Activated T-helper 2 cell treated with anti-CD3 and anti-CD28 coated beads, Interferon-gamma antibody, Interleukin-2, Interleukin-4, amounts not matched to agents 10 μg/mL and 5 μg/mL and 100 μg/mL, durations not matched to agents 14 hours and 24 hours and 36 hours (primary cell): ENCODE measurements at regions of chr19 and their contacts with region 1.

Region 1: DNA sequence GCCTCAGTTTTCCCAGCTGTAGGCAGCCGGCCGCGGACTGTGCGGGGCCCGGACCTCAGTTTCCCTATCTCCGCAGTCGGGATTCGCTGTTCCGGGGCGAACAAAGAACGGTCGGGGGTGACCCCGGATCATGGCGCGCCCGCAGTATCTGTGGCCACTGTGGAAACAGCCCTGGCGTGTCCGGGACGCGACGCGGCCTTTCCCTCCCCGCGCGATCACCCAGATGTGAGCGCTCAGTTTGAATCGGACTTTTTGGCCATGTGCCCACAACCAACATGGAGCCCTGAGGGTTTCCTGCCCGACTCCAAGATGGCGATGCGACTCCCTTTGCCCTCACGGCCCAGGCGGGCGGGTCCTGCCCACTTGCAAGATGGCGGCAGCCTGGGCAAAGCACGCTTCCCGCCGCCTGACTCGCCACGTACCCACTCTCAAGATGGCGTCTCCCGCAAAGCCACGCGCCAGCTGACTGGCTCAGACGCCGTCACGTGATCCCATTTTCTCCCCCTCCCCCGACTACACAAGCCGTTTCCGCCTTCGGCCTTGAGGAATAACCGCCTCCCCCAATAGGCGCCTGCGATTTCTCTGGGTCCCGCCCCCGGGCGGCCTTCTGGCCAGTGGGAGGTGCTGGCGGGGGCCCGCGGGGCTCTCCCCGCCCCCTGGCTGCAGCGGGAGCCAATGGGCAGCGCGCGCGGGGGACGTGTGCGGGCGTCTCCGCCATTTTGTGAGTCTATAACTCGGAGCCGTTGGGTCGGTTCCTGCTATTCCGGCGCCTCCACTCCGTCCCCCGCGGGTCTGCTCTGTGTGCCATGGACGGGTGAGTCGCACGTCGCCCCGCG is at the start of gene PTBP1:
- DNase-seq: peak; percentile 100
- H3K4me3 Mint-ChIP-seq: peak within 1 kb of the TSS; percentile 91
- H3K27ac Mint-ChIP-seq: peak within 1 kb of the TSS; percentile 93
- H3K4me1 Mint-ChIP-seq: peaks cover 20% of the 10 kb centered on the region
- H3K27me3 Mint-ChIP-seq: no peaks in the 10 kb centered on the region
- total RNA-seq, gene PTBP1: 735 and 739 TPM in 2 replicates

Region 2: GRCh38 chr19:572140-572742 is 224.7 kb before region 1 on chr19 and contains the start of gene BSG:
- intact Hi-C with region 1: loop called (anchors 2 kb)
- DNase-seq: peak; percentile 99
- H3K4me3 Mint-ChIP-seq: peak within 1 kb of the TSS; percentile 86
- H3K27ac Mint-ChIP-seq: peak within 1 kb of the TSS; percentile 94
- H3K4me1 Mint-ChIP-seq: peaks cover 24% of the 10 kb centered on the region
- H3K27me3 Mint-ChIP-seq: no peaks in the 10 kb centered on the region
- total RNA-seq, gene BSG: 300 and 304 TPM in 2 replicates

Region 3: DNA sequence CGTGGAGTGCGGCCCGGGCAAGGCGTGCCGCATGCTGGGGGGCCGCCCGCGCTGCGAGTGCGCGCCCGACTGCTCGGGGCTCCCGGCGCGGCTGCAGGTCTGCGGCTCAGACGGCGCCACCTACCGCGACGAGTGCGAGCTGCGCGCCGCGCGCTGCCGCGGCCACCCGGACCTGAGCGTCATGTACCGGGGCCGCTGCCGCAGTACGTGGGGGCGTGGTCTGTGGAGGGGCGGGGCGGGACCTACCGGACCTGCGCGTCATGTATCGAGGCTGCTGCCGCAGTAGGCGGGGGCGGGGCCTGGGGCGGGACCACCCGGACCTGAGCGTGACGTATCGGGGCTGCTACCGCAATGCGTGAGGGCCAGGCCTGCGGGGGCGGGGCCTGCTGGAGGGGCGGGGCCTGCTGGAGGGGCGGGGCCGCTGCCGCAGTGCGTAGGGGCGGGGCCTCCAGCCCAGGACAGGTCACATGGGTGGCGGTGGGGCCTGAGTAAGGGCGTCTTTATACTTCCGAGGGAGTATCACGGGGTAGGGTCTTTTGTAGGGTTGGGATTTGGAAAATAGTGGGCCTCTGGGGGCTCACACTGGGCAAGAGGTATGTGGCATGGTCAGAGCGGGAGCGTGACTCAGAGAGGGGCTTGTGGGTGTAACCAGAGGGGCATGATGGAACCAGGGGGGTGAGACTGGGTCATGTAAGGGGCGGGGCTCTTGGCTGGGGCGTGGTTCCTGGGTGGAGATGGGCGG is 116.5 kb before region 1 on chr19:
- intact Hi-C with region 1: loop called (anchors 1 kb)
- DNase-seq: peak; percentile 97
- H3K4me3 Mint-ChIP-seq: peak overlapping the region; percentile 88
- H3K27ac Mint-ChIP-seq: peak overlapping the region; percentile 97
- H3K4me1 Mint-ChIP-seq: peaks cover 1% of the 10 kb centered on the region
- H3K27me3 Mint-ChIP-seq: peaks cover 7% of the 10 kb centered on the region

Region 4: GRCh38 chr19:913080-913748 is 116.3 kb after region 1 on chr19 and contains the start of gene R3HDM4:
- intact Hi-C with region 1: loop called (anchors 5 kb)
- DNase-seq: peak; percentile 80
- H3K4me3 Mint-ChIP-seq: peak within 1 kb of the TSS; percentile 84
- H3K27ac Mint-ChIP-seq: peak within 1 kb of the TSS; percentile 80
- H3K4me1 Mint-ChIP-seq: peaks cover 19% of the 10 kb centered on the region
- H3K27me3 Mint-ChIP-seq: peaks cover 2% of the 10 kb centered on the region
- total RNA-seq, gene R3HDM4: 77.1 and 83.3 TPM in 2 replicates

Region 5: DNA sequence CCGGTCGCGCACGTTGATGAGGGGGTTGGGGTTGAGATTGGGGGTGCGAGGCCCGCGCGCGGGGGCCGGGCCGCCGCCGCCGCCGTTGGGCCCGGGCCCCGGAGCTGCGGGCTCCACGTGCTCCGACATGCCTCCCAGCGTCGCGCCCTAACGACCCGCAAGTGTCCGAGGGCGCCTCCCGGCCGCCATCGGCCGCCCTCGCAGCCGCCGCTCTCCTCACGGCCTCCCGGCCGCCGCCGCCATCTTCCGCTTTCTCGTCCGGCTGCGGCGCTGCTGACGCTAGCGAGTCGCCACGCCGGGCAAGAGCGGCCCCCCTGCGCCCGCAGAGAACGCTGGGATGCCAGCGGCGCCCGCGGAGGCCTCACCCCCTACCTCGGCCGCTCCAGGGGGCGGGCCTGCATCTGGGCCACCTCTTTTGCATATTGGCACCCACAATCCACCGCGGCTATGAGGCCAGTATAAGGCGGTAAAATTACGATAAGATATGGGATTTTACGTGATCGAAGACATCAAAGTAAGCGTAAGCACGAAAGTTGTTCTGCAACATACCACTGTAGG is 224.0 kb after region 1 on chr19 and contains the start of gene TMEM259:
- intact Hi-C with region 1: loop called (anchors 1 kb)
- DNase-seq: peak; percentile 94
- H3K4me3 Mint-ChIP-seq: peak within 1 kb of the TSS; percentile 91
- H3K27ac Mint-ChIP-seq: peak within 1 kb of the TSS; percentile 100
- H3K4me1 Mint-ChIP-seq: peaks cover 20% of the 10 kb centered on the region
- H3K27me3 Mint-ChIP-seq: no peaks in the 10 kb centered on the region
- total RNA-seq, gene TMEM259: 137 and 138 TPM in 2 replicates

Region 6: DNA sequence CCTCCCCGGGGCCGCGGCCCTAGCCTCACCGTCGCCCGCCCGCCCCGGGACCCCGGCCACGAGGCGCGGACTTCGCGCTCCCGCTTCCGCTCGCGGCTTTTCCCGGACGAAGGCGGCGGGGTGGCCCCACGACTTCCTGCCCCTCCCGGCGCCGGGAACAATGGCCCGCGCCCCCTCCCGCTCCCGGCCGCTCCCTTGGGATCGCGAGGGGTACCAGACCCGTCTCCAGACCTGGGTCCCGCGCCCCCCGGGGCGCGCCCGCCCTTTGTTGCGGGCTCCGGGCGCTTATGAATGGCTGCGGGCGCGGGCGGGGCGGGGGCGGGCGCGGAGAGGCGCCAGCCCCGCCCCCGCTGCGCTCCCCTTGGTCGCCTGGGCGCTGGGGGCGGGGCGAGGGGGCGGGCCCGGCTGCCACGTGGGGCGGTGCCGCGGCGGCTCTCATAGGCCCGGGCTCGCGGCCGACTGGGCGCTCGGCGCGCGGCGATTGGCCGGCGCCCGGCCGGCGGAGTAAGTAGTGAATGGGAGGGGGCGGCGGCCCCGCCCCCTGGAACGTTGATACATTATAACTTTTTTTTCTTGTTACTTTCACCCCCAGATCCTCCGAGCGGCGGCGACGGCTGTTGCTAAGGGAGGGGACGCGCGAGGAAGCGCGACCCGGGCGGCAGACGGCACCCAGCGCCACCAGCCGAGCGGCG is 452.5 kb after region 1 on chr19:
- intact Hi-C with region 1: no loop called
- DNase-seq: peak; percentile 93
- H3K4me3 Mint-ChIP-seq: peak overlapping the region; percentile 78
- H3K27ac Mint-ChIP-seq: peak overlapping the region; percentile 46
- H3K4me1 Mint-ChIP-seq: peaks cover 9% of the 10 kb centered on the region
- H3K27me3 Mint-ChIP-seq: no peaks in the 10 kb centered on the region